HEK293 (cell line): ENCODE measurements at regions of chrX and their contacts with region 1.

Region 1: DNA sequence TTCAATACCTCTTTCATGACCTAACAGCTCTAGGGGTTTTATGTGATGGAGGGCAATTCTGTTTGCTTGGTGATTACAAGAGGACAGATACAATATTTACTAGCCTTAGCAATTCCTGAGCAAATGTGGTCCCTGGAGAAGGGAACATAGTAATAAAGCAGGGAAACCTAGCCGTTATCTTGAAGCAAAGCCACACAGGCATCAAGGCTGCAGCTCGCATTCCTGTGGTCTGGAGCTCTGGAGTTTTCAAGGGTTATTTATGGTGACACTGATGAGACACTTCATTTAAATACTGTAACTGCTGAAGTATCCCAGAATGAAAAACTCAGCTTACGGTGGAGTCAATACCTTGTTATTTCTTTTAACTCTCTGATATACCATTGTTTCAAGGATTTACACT is 66.8 kb downstream of the AFF2 start:
- H3K4me3 ChIP-seq: no peak overlapping the region
- H3K27ac ChIP-seq: no peak overlapping the region
- H3K4me1 ChIP-seq: 0 out of 2 replicates have a peak, but pooled peaks cover 3% of the 10 kb centered on the region
- CTCF ChIP-seq: no peak

Region 2: DNA sequence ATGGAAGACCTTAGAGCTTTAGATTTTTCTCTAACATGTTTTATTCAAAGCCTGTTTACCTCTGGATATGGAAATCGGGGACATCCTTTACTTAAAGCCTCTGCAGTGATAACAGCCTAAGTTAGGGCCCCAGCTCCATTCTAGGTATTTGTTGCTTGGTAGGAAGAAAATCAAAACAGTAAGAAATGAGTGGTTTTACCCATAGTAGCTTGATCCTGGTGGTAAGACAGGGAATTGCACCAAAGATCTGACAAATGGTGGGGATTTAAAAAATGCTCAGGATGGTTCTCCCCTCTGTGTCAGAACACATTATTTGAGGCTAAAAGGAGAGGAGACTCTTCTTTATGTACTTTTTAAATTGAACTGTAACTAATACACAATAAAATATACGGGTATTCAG is 14.5 kb before region 1 on chrX:
- CTCF ChIA-PET with region 1: interaction called, 16 read pairs
- POLR2A ChIA-PET with region 1: no interaction called
- H3K4me3 ChIP-seq: no peak overlapping the region
- H3K27ac ChIP-seq: no peak overlapping the region
- H3K4me1 ChIP-seq: no peaks in the 10 kb centered on the region
- CTCF ChIP-seq: no peak